ENCODE measurements at regions of chr4 and their contacts with region 1.

Region 1: GRCh38 chr4:184649026-184649970 is at the starts of genes CASP3 and PRIMPOL:
- DNase-seq: peak; percentile 96
- H3K4me3 Mint-ChIP-seq: peak within 1 kb of the TSS; percentile 95
- H3K27ac Mint-ChIP-seq: peak within 1 kb of the TSS; percentile 91
- H3K4me1 Mint-ChIP-seq: peaks cover 59% of the 10 kb centered on the region
- H3K27me3 Mint-ChIP-seq: no peaks in the 10 kb centered on the region
- total RNA-seq, gene CASP3: 116 and 121 TPM in 2 replicates
- total RNA-seq, gene PRIMPOL: 16.4 and 19.7 TPM in 2 replicates

Region 2: DNA sequence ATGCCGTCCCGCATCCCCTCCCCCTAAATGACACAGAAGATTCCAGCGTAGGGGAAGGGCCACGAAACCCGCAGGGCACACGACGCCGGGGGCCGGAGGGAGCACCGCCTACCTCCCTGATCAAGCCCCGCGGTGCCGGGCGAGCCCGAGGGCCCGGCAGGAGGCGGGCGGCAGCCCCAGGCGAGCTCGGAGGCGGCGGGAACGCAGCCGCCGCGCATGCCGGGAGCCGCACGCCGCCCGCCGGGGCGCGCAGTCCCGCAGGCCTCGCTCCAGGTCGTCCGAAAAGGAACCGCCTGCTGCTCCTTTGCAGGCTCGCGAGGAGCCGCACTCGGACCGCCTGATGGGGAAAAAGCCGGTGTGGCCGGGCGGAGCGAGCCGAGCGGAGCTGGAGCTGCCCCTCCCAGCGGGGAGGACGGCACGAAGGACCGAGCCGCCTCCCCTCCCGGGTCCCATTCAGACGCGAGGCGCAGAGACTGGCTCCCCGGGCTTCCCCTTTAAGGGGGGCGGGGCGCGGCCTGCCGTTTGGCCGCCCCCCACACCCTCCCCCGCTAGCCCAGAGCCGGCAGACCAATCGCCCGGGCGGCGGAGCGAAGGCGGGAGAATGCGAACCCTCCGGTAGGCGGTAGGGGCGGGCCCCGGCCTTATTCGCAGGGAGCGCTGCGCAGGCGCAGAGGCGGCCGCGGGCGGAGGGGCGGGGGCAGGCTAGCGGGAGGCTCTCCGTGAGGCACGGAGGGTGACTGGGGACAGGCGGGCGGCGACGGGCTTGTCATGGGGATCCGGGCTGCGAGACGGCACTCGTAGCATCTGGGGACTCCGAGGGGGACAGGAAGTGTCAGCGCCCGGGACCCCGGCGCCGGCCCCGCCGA is 1145.0 kb before region 1 on chr4:
- intact Hi-C with region 1: loop called (anchors 2 kb)
- DNase-seq: peak; percentile 100
- H3K4me3 Mint-ChIP-seq: peak overlapping the region; percentile 92
- H3K27ac Mint-ChIP-seq: peak overlapping the region; percentile 97
- H3K4me1 Mint-ChIP-seq: peaks cover 23% of the 10 kb centered on the region
- H3K27me3 Mint-ChIP-seq: no peaks in the 10 kb centered on the region

Region 3: GRCh38 chr4:184289179-184289535 is 360.1 kb before region 1 on chr4:
- intact Hi-C with region 1: no loop called
- DNase-seq: no peak
- H3K4me3 Mint-ChIP-seq: no peak overlapping the region
- H3K27ac Mint-ChIP-seq: peak overlapping the region; percentile 25
- H3K4me1 Mint-ChIP-seq: peaks cover 44% of the 10 kb centered on the region
- H3K27me3 Mint-ChIP-seq: no peaks in the 10 kb centered on the region

Region 4: GRCh38 chr4:184417802-184418511 is 231.3 kb before region 1 on chr4:
- intact Hi-C with region 1: loop called (anchors 1 kb)
- DNase-seq: peak; percentile 21
- H3K4me3 Mint-ChIP-seq: peak overlapping the region; percentile 78
- H3K27ac Mint-ChIP-seq: peak overlapping the region; percentile 95
- H3K4me1 Mint-ChIP-seq: peaks cover 90% of the 10 kb centered on the region
- H3K27me3 Mint-ChIP-seq: no peaks in the 10 kb centered on the region

Region 5: GRCh38 chr4:184575306-184575705 is 74.0 kb before region 1 on chr4:
- intact Hi-C with region 1: loop called (anchors 1 kb)
- DNase-seq: no peak
- H3K4me3 Mint-ChIP-seq: no peak overlapping the region
- H3K27ac Mint-ChIP-seq: peak overlapping the region; percentile 55
- H3K4me1 Mint-ChIP-seq: peaks cover 19% of the 10 kb centered on the region
- H3K27me3 Mint-ChIP-seq: no peaks in the 10 kb centered on the region

Region 6: GRCh38 chr4:184705692-184706091 is 56.4 kb after region 1 on chr4:
- intact Hi-C with region 1: loop called (anchors 2 kb)
- DNase-seq: no peak
- H3K4me3 Mint-ChIP-seq: peak overlapping the region; percentile 8
- H3K27ac Mint-ChIP-seq: peak overlapping the region; percentile 32
- H3K4me1 Mint-ChIP-seq: peaks cover 27% of the 10 kb centered on the region
- H3K27me3 Mint-ChIP-seq: no peaks in the 10 kb centered on the region

Region 7: GRCh38 chr4:185142912-185143595 is 493.8 kb after region 1 on chr4 and contains the start of gene SLC25A4:
- intact Hi-C with region 1: loop called (anchors 5 kb)
- DNase-seq: peak; percentile 56
- H3K4me3 Mint-ChIP-seq: peak within 1 kb of the TSS; percentile 82
- H3K27ac Mint-ChIP-seq: no peak within 1 kb of the TSS
- H3K4me1 Mint-ChIP-seq: peaks cover 12% of the 10 kb centered on the region
- H3K27me3 Mint-ChIP-seq: peaks cover 71% of the 10 kb centered on the region
- total RNA-seq, gene SLC25A4: 2.3 and 2.7 TPM in 2 replicates

Measured in activated T-helper 1 cell treated with anti-CD3 and anti-CD28 coated beads, Interleukin-12 subunit alpha, Interleukin-12 subunit beta, Interleukin-2, Interleukin-4 antibody, amounts not matched to agents 30 ng/mL and 10 ng/mL and 1 ng/mL, durations not matched to agents 14 hours and 24 hours and 36 hours (primary cell).